ENCODE measurements at regions of chrX and their contacts with region 1.

Region 1: GRCh38 chrX:10119399-10119990 is 37.3 kb upstream of the CLCN4 start:
- DNase-seq: peak in 4 of 6 donors; percentile 54 to 82 (median 72)
- ATAC-seq: peak; percentile 80 to 97 (median 91)
- H3K4me3 ChIP-seq: no peak overlapping the region
- H3K27ac ChIP-seq: no peak overlapping the region
- H3K4me1 ChIP-seq: no peaks in the 10 kb centered on the region
- H3K27me3 ChIP-seq: no peaks in the 10 kb centered on the region
- CTCF ChIP-seq: peak; percentile 100

Region 2: DNA sequence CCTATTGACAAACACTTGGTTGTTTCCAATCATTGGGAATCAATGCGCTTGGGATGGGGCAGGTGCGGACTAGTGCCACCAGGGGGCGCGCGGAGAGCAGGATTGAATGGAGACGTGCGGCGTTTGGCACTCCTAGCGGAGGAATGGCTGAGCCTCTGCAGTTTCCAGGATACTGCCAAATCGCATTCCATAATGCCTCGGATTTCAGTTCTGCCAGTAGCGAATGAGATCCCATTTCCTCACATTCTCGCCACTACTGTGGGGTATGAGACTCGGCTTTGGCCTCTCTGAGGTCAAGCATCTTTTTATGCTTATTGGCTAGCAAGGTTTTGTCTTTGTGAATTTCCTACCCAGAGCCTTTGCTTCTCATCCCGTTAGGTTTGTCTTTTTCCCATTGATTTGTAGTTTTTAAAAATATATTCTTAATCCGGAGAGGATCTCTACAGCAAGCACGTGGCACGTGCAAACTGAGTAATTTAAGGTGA is 123.6 kb before region 1 on chrX:
- intact Hi-C with region 1: loop called in 2 of 3 experiments (anchors 5 kb)
- DNase-seq: peak; percentile 63 to 92 (median 84)
- ATAC-seq: peak; percentile 97 to 100 (median 99)
- H3K4me3 ChIP-seq: no peak overlapping the region
- H3K27ac ChIP-seq: no peak overlapping the region
- H3K4me1 ChIP-seq: no peaks in the 10 kb centered on the region
- H3K27me3 ChIP-seq: no peaks in the 10 kb centered on the region
- CTCF ChIP-seq: peak; percentile 76 to 92 (median 82)

Region 3: GRCh38 chrX:10022580-10023245 is 96.8 kb before region 1 on chrX:
- intact Hi-C with region 1: no loop called
- DNase-seq: peak in 1 of 6 donors; percentile 16
- ATAC-seq: peak in 3 of 4 donors; percentile 44 to 51 (median 50)
- H3K4me3 ChIP-seq: no peak overlapping the region
- H3K27ac ChIP-seq: no peak overlapping the region
- H3K4me1 ChIP-seq: no peaks in the 10 kb centered on the region
- H3K27me3 ChIP-seq: no peaks in the 10 kb centered on the region
- CTCF ChIP-seq: no peak

Region 4: GRCh38 chrX:10166731-10167151 is 47.2 kb after region 1 on chrX:
- intact Hi-C with region 1: no loop called
- DNase-seq: no peak
- ATAC-seq: peak in 3 of 4 donors; percentile 26 to 70 (median 45)
- H3K4me3 ChIP-seq: no peak overlapping the region
- H3K27ac ChIP-seq: peak overlapping the region in 1 of 4 donors; percentile 19
- H3K4me1 ChIP-seq: no peaks in the 10 kb centered on the region
- H3K27me3 ChIP-seq: no peaks in the 10 kb centered on the region
- CTCF ChIP-seq: no peak

Region 5: GRCh38 chrX:11100281-11101035 is 981.0 kb after region 1 on chrX:
- intact Hi-C with region 1: no loop called
- DNase-seq: no peak
- ATAC-seq: peak in 3 of 4 donors; percentile 43 to 82 (median 64)
- H3K4me3 ChIP-seq: no peak overlapping the region
- H3K27ac ChIP-seq: no peak overlapping the region
- H3K4me1 ChIP-seq: no peaks in the 10 kb centered on the region
- H3K27me3 ChIP-seq: peaks cover 0 to 4% (median 0%) of the 10 kb centered on the region in 4 donors
- CTCF ChIP-seq: no peak